Pancreas (tissue), 10 donors: ENCODE measurements at regions of chr10 and their contacts with region 1.

Region 1: DNA sequence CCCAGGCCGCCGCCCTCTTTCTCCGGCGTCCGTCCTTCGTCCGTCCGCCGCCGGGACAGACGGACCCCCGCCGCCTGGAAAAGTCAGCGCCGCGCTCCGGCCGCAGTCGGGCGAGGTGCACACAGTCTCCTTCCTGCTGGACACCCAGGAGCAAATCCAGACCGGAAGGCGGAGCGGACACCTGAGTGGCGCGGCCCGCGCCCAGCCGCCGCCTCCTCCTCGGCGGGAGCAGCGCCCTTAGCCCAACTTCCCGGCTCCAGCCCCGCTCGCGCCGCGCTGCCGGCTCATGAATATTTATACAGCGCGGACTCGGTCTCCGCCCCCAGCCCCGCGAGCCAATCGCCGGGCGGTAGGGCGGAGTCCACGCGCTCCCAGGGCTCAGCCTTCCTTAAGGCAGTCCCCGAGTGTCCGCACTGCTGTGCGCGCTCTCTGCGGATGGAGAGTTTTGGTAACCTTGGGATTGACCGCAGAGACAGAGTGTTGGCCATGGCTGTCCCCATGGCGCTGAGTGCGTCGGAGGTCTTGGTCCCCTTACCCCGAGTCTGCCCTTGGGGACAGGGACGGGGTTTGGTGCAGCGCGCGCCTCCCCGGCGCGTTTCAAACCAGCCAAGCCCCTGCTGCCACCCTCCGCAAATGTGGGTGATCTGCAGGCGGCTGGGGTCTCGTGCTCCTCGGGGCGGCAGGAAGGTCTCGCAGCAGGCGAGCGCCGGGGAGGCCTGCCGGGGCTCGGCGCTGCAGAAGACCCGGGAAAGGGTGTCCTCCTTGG is at the start of gene FZD8:
- DNase-seq: peak; percentile 93 to 97 (median 96)
- ATAC-seq: peak; percentile 87 to 94 (median 88)
- H3K4me3 ChIP-seq: peak within 1 kb of the TSS; percentile 68 to 86 (median 81)
- H3K27ac ChIP-seq: peak within 1 kb of the TSS; percentile 88 to 94 (median 92)
- H3K4me1 ChIP-seq: no peaks in the 10 kb centered on the region
- H3K27me3 ChIP-seq: no peaks in the 10 kb centered on the region
- CTCF ChIP-seq: no peak
- total RNA-seq, gene FZD8: 4.3 to 7.8 (median 6.6) TPM

Region 2: DNA sequence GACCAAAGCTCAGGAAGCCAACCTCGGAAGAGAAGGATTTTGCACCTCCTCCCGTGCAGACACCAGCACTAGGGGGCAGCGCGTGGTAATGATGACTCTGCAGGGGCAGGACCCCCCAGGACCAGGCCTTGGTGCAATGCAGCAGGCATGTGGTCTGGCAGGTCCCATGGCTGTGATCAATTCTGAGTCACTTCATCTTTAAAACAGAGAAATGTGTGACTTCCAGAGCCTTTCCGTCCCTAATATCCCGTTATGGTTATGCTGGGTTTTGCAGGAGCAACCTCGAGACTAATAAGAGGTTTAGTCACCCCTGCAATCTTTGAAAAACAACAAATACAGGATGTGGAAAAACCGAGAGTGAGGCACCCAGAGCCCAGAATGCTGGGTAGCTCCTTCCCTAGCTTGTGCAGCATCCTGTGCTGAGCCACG is 67.3 kb before region 1 on chr10:
- intact Hi-C with region 1: no loop called
- DNase-seq: no peak
- ATAC-seq: no peak
- H3K4me3 ChIP-seq: no peak overlapping the region
- H3K27ac ChIP-seq: no peak overlapping the region
- H3K4me1 ChIP-seq: no peaks in the 10 kb centered on the region
- H3K27me3 ChIP-seq: no peaks in the 10 kb centered on the region
- CTCF ChIP-seq: no peak

Region 3: GRCh38 chr10:35778306-35778705 is 136.1 kb after region 1 on chr10:
- intact Hi-C with region 1: loop called in 1 of 3 experiments (anchors 5 kb)
- DNase-seq: no peak
- ATAC-seq: no peak
- H3K4me3 ChIP-seq: no peak overlapping the region
- H3K27ac ChIP-seq: no peak overlapping the region
- H3K4me1 ChIP-seq: no peaks in the 10 kb centered on the region
- H3K27me3 ChIP-seq: no peaks in the 10 kb centered on the region
- CTCF ChIP-seq: no peak

Region 4: DNA sequence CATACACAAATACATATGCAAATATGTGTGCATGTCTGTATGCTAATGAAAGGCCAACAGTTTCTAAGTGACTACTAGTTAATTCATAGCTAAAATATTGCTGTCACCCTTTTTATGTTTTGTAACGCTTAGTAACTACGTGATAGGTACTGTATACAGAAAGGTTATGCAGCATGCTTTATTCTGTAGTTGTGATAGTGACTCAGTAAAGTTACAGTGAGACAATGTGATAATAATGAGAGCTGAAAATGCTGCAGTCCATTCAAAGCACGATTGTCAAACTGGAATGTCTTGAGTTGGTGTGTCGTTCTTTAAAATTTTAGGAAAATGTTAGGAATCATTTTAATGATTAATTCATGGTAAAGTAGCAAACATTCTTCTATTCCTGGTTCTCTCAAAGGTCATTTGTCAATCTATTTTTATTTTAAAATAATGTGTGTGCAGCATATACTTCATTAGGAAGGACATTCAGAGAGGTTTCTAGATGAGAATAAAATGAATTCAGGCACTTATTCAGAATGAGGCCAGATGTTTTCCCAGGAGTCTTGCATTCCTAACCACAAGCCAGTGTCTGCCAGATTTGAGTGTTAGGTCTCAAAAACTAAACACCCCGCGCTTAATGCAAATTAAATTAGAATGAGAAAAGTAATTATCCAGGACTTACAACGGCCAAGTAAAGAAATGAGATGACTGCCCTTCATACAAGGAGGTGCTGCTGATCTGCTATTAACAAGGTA is 408.7 kb after region 1 on chr10:
- intact Hi-C with region 1: no loop called
- DNase-seq: no peak
- ATAC-seq: no peak
- H3K4me3 ChIP-seq: no peak overlapping the region
- H3K27ac ChIP-seq: no peak overlapping the region
- H3K4me1 ChIP-seq: no peaks in the 10 kb centered on the region
- H3K27me3 ChIP-seq: no peaks in the 10 kb centered on the region
- CTCF ChIP-seq: no peak